ENCODE measurements at regions of chr6 and their contacts with region 1.

Region 1: DNA sequence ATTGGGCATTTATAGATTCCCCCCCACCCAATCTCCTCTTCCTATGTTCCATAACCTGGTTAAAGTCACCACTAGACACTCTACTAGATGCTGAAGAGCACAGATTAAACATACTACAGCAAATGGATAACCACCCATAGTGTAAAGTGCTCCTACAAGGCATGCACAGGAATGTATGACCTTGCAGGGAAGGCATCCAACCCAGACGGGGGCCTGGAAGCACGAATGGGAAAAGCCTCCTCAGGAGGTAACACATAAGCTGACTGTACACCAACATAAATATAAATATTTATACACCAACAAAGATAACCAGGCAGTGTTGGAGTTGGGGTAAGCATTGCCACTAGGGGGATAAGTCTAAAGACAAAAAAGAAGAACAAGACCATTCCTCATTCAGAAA is 691.7 kb downstream of the GRIK2 start:
- DNase-seq: no peak
- H3K4me3 ChIP-seq: no peak overlapping the region
- H3K27ac ChIP-seq: no peak overlapping the region
- H3K4me1 ChIP-seq: no peaks in the 10 kb centered on the region
- H3K27me3 ChIP-seq: no peaks in the 10 kb centered on the region
- CTCF ChIP-seq: no peak
- POLR2A ChIP-seq: no peak

Region 2: GRCh38 chr6:102051720-102052119 is 33.5 kb before region 1 on chr6:
- intact Hi-C with region 1: loop called (anchors 2 kb)
- DNase-seq: no peak
- H3K4me3 ChIP-seq: no peak overlapping the region
- H3K27ac ChIP-seq: no peak overlapping the region
- H3K4me1 ChIP-seq: no peaks in the 10 kb centered on the region
- H3K27me3 ChIP-seq: no peaks in the 10 kb centered on the region
- CTCF ChIP-seq: no peak
- POLR2A ChIP-seq: no peak

Region 3: GRCh38 chr6:102381203-102381602 is 295.9 kb after region 1 on chr6:
- intact Hi-C with region 1: no loop called
- DNase-seq: no peak
- H3K4me3 ChIP-seq: no peak overlapping the region
- H3K27ac ChIP-seq: no peak overlapping the region
- H3K4me1 ChIP-seq: no peaks in the 10 kb centered on the region
- H3K27me3 ChIP-seq: no peaks in the 10 kb centered on the region
- CTCF ChIP-seq: no peak
- POLR2A ChIP-seq: no peak